Activated naive CD4-positive, alpha-beta T cell treated with anti-CD3 and anti-CD28 coated beads for 36 hours (primary cell): ENCODE measurements at regions of chr10 and their contacts with region 1.

Region 1: GRCh38 chr10:94439275-94439861 is 37.0 kb downstream of the TBC1D12 start:
- DNase-seq: no peak
- H3K4me3 Mint-ChIP-seq: no peak overlapping the region
- H3K27ac Mint-ChIP-seq: no peak overlapping the region
- H3K4me1 Mint-ChIP-seq: no peaks in the 10 kb centered on the region
- H3K27me3 Mint-ChIP-seq: peaks cover 17% of the 10 kb centered on the region

Region 2: DNA sequence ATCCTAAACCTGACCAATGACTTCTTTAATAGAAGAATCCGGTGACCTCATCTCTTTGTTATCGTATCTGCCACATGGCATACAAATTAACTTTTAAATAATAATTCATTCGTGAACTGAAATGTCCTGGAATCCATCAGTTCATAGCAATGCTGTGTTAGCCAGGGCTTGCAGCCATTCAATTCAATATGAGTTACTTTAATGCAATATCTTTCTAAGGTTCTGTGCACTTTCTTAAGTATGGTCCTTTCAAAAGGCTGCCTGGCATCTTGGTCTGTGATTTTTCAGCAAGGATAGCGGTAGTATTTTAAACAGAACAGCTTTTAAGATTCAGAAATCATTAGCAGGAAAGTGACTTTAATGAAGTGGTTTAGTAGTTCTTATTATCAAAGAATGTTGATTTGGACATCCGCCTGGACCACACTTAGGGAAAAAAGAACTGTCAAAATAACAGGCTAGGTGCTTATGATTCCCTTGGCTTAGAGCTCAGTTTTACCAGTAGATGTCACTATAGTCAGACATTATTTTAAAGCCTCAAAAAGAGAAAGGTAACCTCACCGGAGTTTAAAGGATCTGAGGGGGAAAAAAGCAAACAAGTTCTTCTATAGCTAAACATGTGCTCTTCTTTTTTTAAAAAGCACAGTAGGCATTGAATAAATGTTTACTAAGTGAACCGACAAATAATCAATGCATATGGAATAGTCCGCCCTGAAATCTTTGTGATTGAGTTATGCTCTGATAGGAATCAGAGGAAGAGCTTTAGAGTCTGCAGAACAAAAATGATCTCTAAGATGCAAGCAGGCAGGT is 522.9 kb before region 1 on chr10:
- CTCF ChIA-PET with region 1: no interaction called
- intact Hi-C with region 1: loop called (anchors 2 kb)
- DNase-seq: no peak
- H3K4me3 Mint-ChIP-seq: no peak overlapping the region
- H3K27ac Mint-ChIP-seq: no peak overlapping the region
- H3K4me1 Mint-ChIP-seq: no peaks in the 10 kb centered on the region
- H3K27me3 Mint-ChIP-seq: no peaks in the 10 kb centered on the region

Region 3: GRCh38 chr10:94279835-94280709 is 159.3 kb before region 1 on chr10:
- CTCF ChIA-PET with region 1: interaction called, 10 read pairs
- intact Hi-C with region 1: loop called (anchors 1 kb)
- DNase-seq: peak; percentile 63
- H3K4me3 Mint-ChIP-seq: no peak overlapping the region
- H3K27ac Mint-ChIP-seq: no peak overlapping the region
- H3K4me1 Mint-ChIP-seq: peaks cover 5% of the 10 kb centered on the region
- H3K27me3 Mint-ChIP-seq: peaks cover 11% of the 10 kb centered on the region

Region 4: GRCh38 chr10:94489107-94489506 is 49.7 kb after region 1 on chr10:
- CTCF ChIA-PET with region 1: no interaction called
- intact Hi-C with region 1: no loop called
- DNase-seq: no peak
- H3K4me3 Mint-ChIP-seq: no peak overlapping the region
- H3K27ac Mint-ChIP-seq: no peak overlapping the region
- H3K4me1 Mint-ChIP-seq: no peaks in the 10 kb centered on the region
- H3K27me3 Mint-ChIP-seq: peaks cover 10% of the 10 kb centered on the region